Prostate gland (tissue), 2 donors: ENCODE measurements at regions of chr11 and their contacts with region 1.

Region 1: GRCh38 chr11:355581-356458 is 13.5 kb upstream of the B4GALNT4 start:
- DNase-seq: peak; percentile 88
- H3K4me3 ChIP-seq: peak overlapping the region; percentile 36 to 43
- H3K27ac ChIP-seq: peak overlapping the region; percentile 94 to 97
- H3K4me1 ChIP-seq: no peaks in the 10 kb centered on the region
- H3K27me3 ChIP-seq: no peaks in the 10 kb centered on the region
- CTCF ChIP-seq: peak in 1 of 4 experiments; percentile 15
- POLR2A ChIP-seq: peak; percentile 36

Region 2: GRCh38 chr11:199782-200181 is 156.0 kb before region 1 on chr11:
- intact Hi-C with region 1: loop called (anchors 5 kb)
- DNase-seq: no peak
- H3K4me3 ChIP-seq: no peak overlapping the region
- H3K27ac ChIP-seq: no peak overlapping the region
- H3K4me1 ChIP-seq: no peaks in the 10 kb centered on the region
- H3K27me3 ChIP-seq: no peaks in the 10 kb centered on the region
- CTCF ChIP-seq: no peak
- POLR2A ChIP-seq: no peak

Region 3: DNA sequence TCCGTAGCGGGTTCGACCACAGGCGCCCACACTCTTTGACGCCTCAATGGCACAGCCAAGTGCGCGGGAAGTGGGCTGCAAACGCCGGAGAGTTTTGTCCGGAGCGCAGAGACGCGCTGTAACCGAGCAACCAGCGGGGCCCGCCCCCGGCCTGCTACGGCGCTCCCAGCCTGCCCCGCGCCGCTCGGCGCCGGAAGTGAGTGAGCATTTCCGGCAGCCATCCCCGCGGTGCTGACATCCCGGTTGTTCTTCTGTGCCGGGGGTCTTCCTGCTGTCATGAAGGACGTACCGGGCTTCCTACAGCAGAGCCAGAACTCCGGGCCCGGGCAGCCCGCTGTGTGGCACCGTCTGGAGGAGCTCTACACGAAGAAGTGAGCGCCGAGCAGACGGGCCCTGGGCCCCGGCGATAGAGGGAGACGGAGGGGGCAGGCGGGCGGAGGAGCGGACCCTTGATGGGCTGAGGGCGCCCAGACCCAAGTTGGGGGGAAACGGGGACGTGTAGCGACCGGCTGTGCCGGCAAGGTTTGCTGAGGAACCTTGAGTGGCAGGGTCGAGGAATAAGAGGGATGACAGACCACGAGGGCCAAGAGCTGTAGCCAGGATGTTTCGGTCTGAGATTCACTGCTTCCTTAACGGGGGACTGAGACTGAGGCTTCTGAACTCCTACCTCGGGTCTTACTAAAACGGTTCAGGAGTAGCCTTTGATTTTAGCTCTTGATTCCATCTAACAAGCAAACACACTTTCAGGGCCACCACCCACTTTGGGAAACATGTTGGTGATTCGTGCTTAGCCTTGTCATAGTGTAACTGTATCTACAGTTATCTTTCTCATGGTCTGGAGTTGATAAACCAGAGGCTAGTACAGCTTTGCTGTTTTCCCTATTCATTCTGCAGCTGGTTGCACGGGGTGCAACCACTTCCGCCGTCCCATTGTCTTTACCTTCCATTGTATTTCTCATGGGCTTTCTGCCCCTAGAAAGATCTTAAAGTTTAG is 118.7 kb before region 1 on chr11 and contains the start of gene PSMD13:
- intact Hi-C with region 1: loop called (anchors 5 kb)
- DNase-seq: peak; percentile 81
- H3K4me3 ChIP-seq: peak within 1 kb of the TSS; percentile 90 to 95
- H3K27ac ChIP-seq: peak within 1 kb of the TSS; percentile 98
- H3K4me1 ChIP-seq: peaks cover 12% of the 10 kb centered on the region
- H3K27me3 ChIP-seq: no peaks in the 10 kb centered on the region
- CTCF ChIP-seq: peak in 1 of 4 experiments; percentile 16
- POLR2A ChIP-seq: peak; percentile 37
- total RNA-seq, gene PSMD13: 87.4 to 129 TPM

Region 4: DNA sequence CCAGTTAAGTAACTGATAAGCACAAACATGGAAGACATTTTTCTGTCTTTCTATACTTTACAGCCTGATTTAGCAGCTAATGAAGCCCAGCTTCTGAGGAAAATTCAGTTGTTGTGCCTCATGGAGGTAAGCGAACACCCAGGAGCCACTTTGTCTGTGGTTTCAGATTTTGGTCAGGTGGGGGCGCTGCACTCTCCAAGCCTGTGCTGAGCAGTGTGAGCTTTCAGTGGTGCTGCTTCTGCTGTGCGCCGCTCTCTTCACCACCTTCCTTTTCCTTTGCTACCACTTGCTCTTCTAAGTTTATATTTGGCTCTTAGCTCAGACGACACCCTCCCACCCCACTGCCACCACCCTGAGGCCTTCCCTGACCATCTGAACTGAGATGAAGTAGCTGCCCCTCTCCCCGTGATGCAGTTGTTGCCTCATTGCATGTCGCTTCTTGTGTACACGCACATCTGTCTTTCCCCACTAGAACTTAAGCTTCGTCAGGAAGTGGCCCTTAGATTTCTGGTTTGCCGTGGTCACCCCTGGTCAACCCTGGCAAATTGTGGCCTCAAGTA is 105.0 kb before region 1 on chr11:
- intact Hi-C with region 1: no loop called
- DNase-seq: peak; percentile 29
- H3K4me3 ChIP-seq: no peak overlapping the region
- H3K27ac ChIP-seq: no peak overlapping the region
- H3K4me1 ChIP-seq: no peaks in the 10 kb centered on the region
- H3K27me3 ChIP-seq: no peaks in the 10 kb centered on the region
- CTCF ChIP-seq: peak in 3 of 4 experiments; percentile 39 to 52 (median 47)
- POLR2A ChIP-seq: no peak

Region 5: GRCh38 chr11:304915-305843 is 50.6 kb before region 1 on chr11:
- intact Hi-C with region 1: loop called (anchors 5 kb)
- DNase-seq: peak; percentile 69
- H3K4me3 ChIP-seq: no peak overlapping the region
- H3K27ac ChIP-seq: no peak overlapping the region
- H3K4me1 ChIP-seq: no peaks in the 10 kb centered on the region
- H3K27me3 ChIP-seq: no peaks in the 10 kb centered on the region
- CTCF ChIP-seq: peak; percentile 12 to 86 (median 64)
- POLR2A ChIP-seq: no peak

Region 6: GRCh38 chr11:575996-576768 is 220.4 kb after region 1 on chr11 and contains the start of gene PHRF1:
- intact Hi-C with region 1: no loop called
- DNase-seq: peak; percentile 94
- H3K4me3 ChIP-seq: peak within 1 kb of the TSS; percentile 67
- H3K27ac ChIP-seq: peak within 1 kb of the TSS; percentile 86 to 91
- H3K4me1 ChIP-seq: peaks cover 18% of the 10 kb centered on the region
- H3K27me3 ChIP-seq: no peaks in the 10 kb centered on the region
- CTCF ChIP-seq: peak in 2 of 4 experiments; percentile 13 to 44
- POLR2A ChIP-seq: peak; percentile 71
- total RNA-seq, gene PHRF1: 20.8 to 55.2 TPM